A673 (cell line): ENCODE measurements at regions of chr17 and their contacts with region 1.

Region 1: GRCh38 chr17:48663134-48663924 is 37.2 kb upstream of the HOXB9 start:
- DNase-seq: peak; percentile 44
- H3K4me3 ChIP-seq: no peak overlapping the region
- H3K27ac ChIP-seq: no peak overlapping the region
- H3K4me1 ChIP-seq: no peaks in the 10 kb centered on the region
- H3K27me3 ChIP-seq: no peaks in the 10 kb centered on the region
- CTCF ChIP-seq: peak; percentile 60

Region 2: GRCh38 chr17:48587276-48588073 is 75.9 kb before region 1 on chr17:
- CTCF ChIA-PET with region 1: no interaction called
- POLR2A ChIA-PET with region 1: interaction called, 14 read pairs
- intact Hi-C with region 1: no loop called
- DNase-seq: peak; percentile 64
- H3K4me3 ChIP-seq: no peak overlapping the region
- H3K27ac ChIP-seq: peak overlapping the region; percentile 40
- H3K4me1 ChIP-seq: peaks cover 55% of the 10 kb centered on the region
- H3K27me3 ChIP-seq: no peaks in the 10 kb centered on the region
- CTCF ChIP-seq: no peak

Region 3: GRCh38 chr17:48647103-48647962 is 16.0 kb before region 1 on chr17:
- CTCF ChIA-PET with region 1: no interaction called
- POLR2A ChIA-PET with region 1: no interaction called
- intact Hi-C with region 1: no loop called
- DNase-seq: no peak
- H3K4me3 ChIP-seq: peak overlapping the region; percentile 46
- H3K27ac ChIP-seq: no peak overlapping the region
- H3K4me1 ChIP-seq: peaks cover 6% of the 10 kb centered on the region
- H3K27me3 ChIP-seq: peaks cover 10% of the 10 kb centered on the region
- CTCF ChIP-seq: no peak